ENCODE measurements at regions of chr3 and their contacts with region 1.

Region 1: DNA sequence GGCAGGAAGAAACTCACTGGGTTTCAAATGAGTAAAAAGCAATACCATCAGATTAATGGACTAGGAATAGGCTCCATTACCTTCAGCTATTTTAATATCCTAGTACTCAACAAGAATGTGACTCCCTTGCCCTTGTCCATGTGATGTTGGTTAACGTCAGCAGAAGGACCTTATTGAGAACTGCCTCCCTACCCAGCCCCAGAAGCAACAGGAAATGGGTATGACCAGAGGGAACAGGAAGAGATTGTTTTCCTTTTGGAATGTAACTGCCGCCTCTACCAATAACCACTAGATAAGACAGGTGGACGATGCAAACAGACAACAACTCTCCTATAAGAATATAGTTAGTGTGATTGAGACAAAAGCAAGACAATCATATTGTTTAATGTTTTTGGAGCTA is 10.4 kb upstream of the MME start:
- DNase-seq: no peak
- ATAC-seq: no peak
- H3K4me3 Mint-ChIP-seq: no peak overlapping the region
- H3K27ac Mint-ChIP-seq: no peak overlapping the region
- H3K4me1 Mint-ChIP-seq: no peaks in the 10 kb centered on the region
- H3K27me3 Mint-ChIP-seq: no peaks in the 10 kb centered on the region

Region 2: DNA sequence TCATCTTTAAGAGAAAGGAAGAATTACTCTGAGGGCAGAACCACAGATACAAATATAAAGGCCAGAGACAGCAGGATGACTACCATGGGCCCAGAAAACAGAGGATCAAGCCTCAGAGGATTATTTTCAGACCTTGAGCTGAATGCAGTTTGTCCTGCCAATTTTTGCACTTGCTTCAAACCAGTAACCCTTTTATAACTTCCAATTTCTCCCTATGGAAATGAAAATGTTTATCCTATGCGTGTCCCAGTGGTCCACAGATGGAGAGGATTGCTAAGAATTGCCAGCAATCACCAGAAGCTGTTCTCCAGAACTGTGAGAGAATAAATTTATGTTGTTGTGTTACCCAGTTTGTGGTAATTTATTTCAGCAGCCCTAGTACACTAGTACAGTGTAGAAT is 16.0 kb before region 1 on chr3:
- CTCF ChIA-PET with region 1: interaction called, 3 read pairs
- POLR2A ChIA-PET with region 1: interaction called, 10 read pairs
- intact Hi-C with region 1: no loop called
- DNase-seq: no peak
- ATAC-seq: no peak
- H3K4me3 Mint-ChIP-seq: no peak overlapping the region
- H3K27ac Mint-ChIP-seq: no peak overlapping the region
- H3K4me1 Mint-ChIP-seq: no peaks in the 10 kb centered on the region
- H3K27me3 Mint-ChIP-seq: no peaks in the 10 kb centered on the region